ENCODE measurements at regions of chr19 and their contacts with region 1.

Region 1: GRCh38 chr19:8138201-8138600 is 11.2 kb downstream of the FBN3 start:
- DNase-seq: no peak
- H3K4me3 ChIP-seq: no peak overlapping the region
- H3K27ac ChIP-seq: no peak overlapping the region
- H3K4me1 ChIP-seq: no peaks in the 10 kb centered on the region
- H3K27me3 ChIP-seq: no peaks in the 10 kb centered on the region
- CTCF ChIP-seq: no peak
- POLR2A ChIP-seq: no peak

Region 2: GRCh38 chr19:8123683-8124082 is 14.5 kb before region 1 on chr19:
- CTCF ChIA-PET with region 1: no interaction called
- POLR2A ChIA-PET with region 1: no interaction called
- dilution Hi-C with region 1: no loop called
- intact Hi-C with region 1: loop called (anchors 2 kb)
- DNase-seq: no peak
- H3K4me3 ChIP-seq: no peak overlapping the region
- H3K27ac ChIP-seq: no peak overlapping the region
- H3K4me1 ChIP-seq: no peaks in the 10 kb centered on the region
- H3K27me3 ChIP-seq: no peaks in the 10 kb centered on the region
- CTCF ChIP-seq: no peak
- POLR2A ChIP-seq: no peak